Calu3 (cell line): ENCODE measurements at regions of chr2 and their contacts with region 1.

Region 1: GRCh38 chr2:27754138-27754588 is 17.4 kb upstream of the MRPL33 start:
- DNase-seq: peak; percentile 93
- H3K4me3 Mint-ChIP-seq: peak overlapping the region; percentile 72
- H3K27ac Mint-ChIP-seq: peak overlapping the region; percentile 95
- H3K4me1 Mint-ChIP-seq: peaks cover 49% of the 10 kb centered on the region
- H3K27me3 Mint-ChIP-seq: no peaks in the 10 kb centered on the region
- CTCF ChIP-seq: peak; percentile 91

Region 2: GRCh38 chr2:27683390-27684071 is 70.6 kb before region 1 on chr2:
- CTCF ChIA-PET with region 1: interaction called, 14 read pairs
- intact Hi-C with region 1: no loop called
- DNase-seq: peak; percentile 88
- H3K4me3 Mint-ChIP-seq: peak overlapping the region; percentile 9
- H3K27ac Mint-ChIP-seq: peak overlapping the region; percentile 92
- H3K4me1 Mint-ChIP-seq: peaks cover 40% of the 10 kb centered on the region
- H3K27me3 Mint-ChIP-seq: no peaks in the 10 kb centered on the region
- CTCF ChIP-seq: peak; percentile 96

Region 3: DNA sequence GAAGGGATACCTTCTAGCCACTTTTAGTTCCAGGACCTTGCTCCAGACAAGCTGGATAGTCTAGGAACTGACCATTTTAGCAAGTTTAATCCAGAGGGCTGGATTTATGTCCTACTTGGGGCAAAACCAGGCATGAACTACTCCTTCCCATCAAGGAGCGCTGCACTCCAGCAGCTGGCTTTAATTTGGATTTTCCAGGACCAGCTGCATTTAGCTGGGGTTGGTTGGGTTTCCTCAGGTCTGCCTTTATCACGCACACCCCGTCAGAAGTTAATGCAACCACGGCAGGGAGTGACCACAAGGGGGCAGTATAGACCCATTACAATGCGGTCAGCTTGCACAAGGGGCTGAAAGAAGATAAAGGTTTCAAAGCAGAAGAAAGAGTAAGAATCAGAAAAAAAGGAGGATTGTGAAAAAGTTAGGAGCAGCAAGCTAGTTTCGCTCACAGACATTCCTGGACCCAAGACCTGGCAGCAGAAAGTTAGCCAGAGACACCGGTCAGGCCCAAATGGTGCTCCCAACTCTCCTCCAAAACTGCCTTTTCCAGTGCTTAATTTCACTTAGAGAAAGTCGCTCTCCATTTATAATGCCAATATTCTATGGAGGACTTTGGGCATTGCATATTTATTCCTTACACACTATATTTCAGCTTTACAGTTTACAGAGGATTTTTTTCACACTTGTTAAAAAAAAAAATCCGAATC is 50.4 kb before region 1 on chr2:
- CTCF ChIA-PET with region 1: interaction called, 27 read pairs
- intact Hi-C with region 1: loop called (anchors 1 kb)
- DNase-seq: peak; percentile 90
- H3K4me3 Mint-ChIP-seq: no peak overlapping the region
- H3K27ac Mint-ChIP-seq: peak overlapping the region; percentile 37
- H3K4me1 Mint-ChIP-seq: peaks cover 31% of the 10 kb centered on the region
- H3K27me3 Mint-ChIP-seq: no peaks in the 10 kb centered on the region
- CTCF ChIP-seq: peak; percentile 84

Region 4: GRCh38 chr2:27723372-27724144 is 30.6 kb before region 1 on chr2:
- CTCF ChIA-PET with region 1: interaction called, 47 read pairs
- intact Hi-C with region 1: loop called (anchors 1 kb)
- DNase-seq: peak; percentile 72
- H3K4me3 Mint-ChIP-seq: no peak overlapping the region
- H3K27ac Mint-ChIP-seq: peak overlapping the region; percentile 53
- H3K4me1 Mint-ChIP-seq: peaks cover 45% of the 10 kb centered on the region
- H3K27me3 Mint-ChIP-seq: no peaks in the 10 kb centered on the region
- CTCF ChIP-seq: peak; percentile 66

Region 5: DNA sequence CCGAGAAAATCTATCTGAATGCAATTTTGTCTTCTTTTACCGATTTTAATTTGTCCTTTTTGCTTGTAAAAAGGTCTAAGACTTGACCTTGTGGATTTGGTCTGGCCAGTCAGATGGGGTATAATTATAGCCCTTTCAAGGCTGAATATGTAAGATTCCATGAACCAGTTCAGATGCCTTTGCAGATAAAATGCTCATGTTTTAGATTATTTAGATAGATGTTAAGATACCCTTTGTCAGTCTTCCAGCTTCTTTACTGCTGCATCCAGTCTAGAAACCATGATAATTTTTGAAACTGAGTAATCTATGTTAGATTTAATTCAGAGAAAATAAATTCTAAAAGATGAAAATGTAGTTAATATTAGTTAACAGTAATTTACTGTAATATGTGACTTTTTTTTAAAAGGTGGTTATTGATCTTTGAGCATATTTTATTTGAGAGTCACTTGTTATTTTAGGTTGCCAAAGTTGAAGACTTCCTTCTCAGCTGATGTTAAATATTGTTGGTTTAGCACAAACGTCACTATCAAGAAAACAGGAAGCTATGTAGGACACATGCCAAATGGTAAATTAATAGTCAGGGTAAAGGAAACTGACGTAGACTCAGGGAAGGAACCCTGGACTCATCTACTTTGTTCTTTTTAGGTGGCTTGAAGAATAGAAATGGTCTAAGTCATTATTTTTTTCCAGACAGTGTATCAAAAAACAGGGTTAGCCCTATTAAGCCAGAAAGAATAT is 166.2 kb after region 1 on chr2:
- CTCF ChIA-PET with region 1: no interaction called
- intact Hi-C with region 1: loop called (anchors 5 kb)
- DNase-seq: peak; percentile 14
- H3K4me3 Mint-ChIP-seq: peak overlapping the region; percentile 40
- H3K27ac Mint-ChIP-seq: peak overlapping the region; percentile 86
- H3K4me1 Mint-ChIP-seq: peaks cover 9% of the 10 kb centered on the region
- H3K27me3 Mint-ChIP-seq: no peaks in the 10 kb centered on the region
- CTCF ChIP-seq: no peak

Region 6: GRCh38 chr2:28233164-28233676 is 479.1 kb after region 1 on chr2:
- CTCF ChIA-PET with region 1: no interaction called
- intact Hi-C with region 1: loop called (anchors 5 kb)
- DNase-seq: peak; percentile 43
- H3K4me3 Mint-ChIP-seq: peak overlapping the region; percentile 61
- H3K27ac Mint-ChIP-seq: peak overlapping the region; percentile 90
- H3K4me1 Mint-ChIP-seq: peaks cover 30% of the 10 kb centered on the region
- H3K27me3 Mint-ChIP-seq: no peaks in the 10 kb centered on the region
- CTCF ChIP-seq: no peak

Region 7: GRCh38 chr2:28419443-28420270 is 665.5 kb after region 1 on chr2:
- CTCF ChIA-PET with region 1: interaction called, 4 read pairs
- intact Hi-C with region 1: loop called (anchors 1 kb)
- DNase-seq: peak; percentile 66
- H3K4me3 Mint-ChIP-seq: no peak overlapping the region
- H3K27ac Mint-ChIP-seq: no peak overlapping the region
- H3K4me1 Mint-ChIP-seq: peaks cover 30% of the 10 kb centered on the region
- H3K27me3 Mint-ChIP-seq: no peaks in the 10 kb centered on the region
- CTCF ChIP-seq: no peak